Left cardiac atrium (tissue), 4 donors: ENCODE measurements at regions of chr5 and their contacts with region 1.

Region 1: DNA sequence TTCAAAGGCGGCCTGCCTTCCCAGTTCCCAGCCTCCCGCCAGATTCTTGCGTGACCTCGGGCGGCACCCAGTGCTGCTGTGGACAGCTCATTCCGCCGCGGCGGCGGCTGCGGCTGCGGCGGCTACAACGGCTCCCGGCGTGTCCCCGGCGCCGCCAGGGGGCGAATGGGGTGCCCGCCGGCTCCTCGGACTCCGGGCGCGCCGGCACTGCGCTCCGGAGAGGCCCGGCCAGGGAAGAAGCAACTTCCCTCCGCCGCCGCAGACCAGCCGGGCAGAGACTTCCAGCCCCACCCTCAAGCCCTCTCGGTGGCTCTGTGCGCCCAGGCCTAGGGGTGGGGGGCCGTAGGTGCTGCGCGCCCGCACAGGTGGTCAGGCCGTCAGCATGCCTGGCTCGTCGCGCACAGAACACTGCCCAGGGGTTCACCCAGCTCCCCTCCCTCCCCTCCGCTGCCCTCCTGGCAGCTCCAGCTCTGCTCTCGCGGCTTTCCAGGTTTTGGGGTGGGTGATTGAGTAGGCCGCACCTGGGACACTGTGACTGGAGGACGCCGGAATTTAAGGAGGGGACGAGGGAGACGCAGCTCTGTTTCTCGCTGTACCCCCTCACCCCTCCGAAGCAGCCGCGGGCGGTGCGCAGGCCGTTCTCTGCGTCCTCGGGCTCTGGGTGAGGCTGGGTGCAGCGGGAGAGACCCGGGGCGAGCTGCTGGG is 20.2 kb downstream of the IGIP start:
- DNase-seq: peak; percentile 84
- ATAC-seq: peak; percentile 95 to 96

Region 2: DNA sequence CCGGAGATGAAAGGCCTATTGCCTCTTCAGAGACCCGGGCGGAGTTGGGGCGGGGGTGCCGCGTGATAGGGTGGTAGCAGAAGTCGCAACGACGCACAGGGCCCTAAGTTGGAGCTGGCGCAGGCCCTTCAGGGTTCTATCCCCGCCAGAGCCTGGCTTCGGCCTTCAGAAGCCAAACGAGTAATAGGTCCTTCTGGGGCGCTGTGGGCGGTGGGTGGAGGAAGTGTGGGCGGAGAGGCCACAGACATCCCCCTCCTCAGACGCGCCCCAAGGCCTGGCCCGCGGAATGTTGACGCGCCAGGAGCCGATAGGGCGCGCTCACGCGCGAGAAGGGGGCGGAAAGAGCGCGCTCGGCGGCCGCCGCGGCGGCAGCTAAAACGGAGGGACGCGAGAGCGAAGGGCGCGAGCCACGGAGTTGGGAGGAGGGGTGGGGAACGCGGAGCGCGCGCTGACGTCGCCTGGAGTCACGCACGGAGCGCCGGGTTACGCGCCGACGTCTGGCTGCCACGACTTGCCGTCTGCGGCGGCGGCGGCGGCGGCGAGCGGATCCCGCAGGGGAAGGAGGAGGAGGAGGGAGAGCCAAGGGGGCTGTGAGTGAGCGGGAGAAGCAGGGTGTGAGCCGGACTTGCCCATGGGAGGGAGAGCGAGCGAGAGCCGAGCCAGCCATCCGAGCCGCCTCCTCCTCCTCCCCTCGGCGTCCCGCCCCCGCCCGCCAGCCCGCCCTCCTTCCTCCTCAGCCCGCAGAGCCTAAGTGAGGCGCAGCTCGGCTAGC is 38.5 kb before region 1 on chr5:
- intact Hi-C with region 1: loop called in 1 of 2 experiments (anchors 5 kb)
- DNase-seq: peak; percentile 94
- ATAC-seq: peak; percentile 96 to 98

Region 3: GRCh38 chr5:140764177-140765020 is 618.4 kb after region 1 on chr5:
- intact Hi-C with region 1: no loop called
- DNase-seq: no peak
- ATAC-seq: no peak